Activated CD4-positive, alpha-beta T cell treated with anti-CD3 and anti-CD28 coated beads for 36 hours (primary cell): ENCODE measurements at regions of chr18 and their contacts with region 1.

Region 1: GRCh38 chr18:26335571-26336487 is 109.6 kb downstream of the TAF4B start:
- DNase-seq: no peak
- ATAC-seq: no peak
- H3K4me3 Mint-ChIP-seq: no peak overlapping the region
- H3K27ac Mint-ChIP-seq: no peak overlapping the region
- H3K4me1 Mint-ChIP-seq: peaks cover 3% of the 10 kb centered on the region
- H3K27me3 Mint-ChIP-seq: no peaks in the 10 kb centered on the region

Region 2: GRCh38 chr18:25921677-25922421 is 414.0 kb before region 1 on chr18:
- CTCF ChIA-PET with region 1: no interaction called
- POLR2A ChIA-PET with region 1: no interaction called
- intact Hi-C with region 1: loop called in 1 of 2 experiments (anchors 10 kb)
- DNase-seq: peak; percentile 65
- ATAC-seq: peak; percentile 64
- H3K4me3 Mint-ChIP-seq: no peak overlapping the region
- H3K27ac Mint-ChIP-seq: no peak overlapping the region
- H3K4me1 Mint-ChIP-seq: no peaks in the 10 kb centered on the region
- H3K27me3 Mint-ChIP-seq: peaks cover 3% of the 10 kb centered on the region